Activated CD8-positive, alpha-beta memory T cell treated with anti-CD3 and anti-CD28 coated beads, Interleukin-2, amount 10 ng/mL, durations not matched to agents 7 days and 5 days (primary cell): ENCODE measurements at regions of chr12 and their contacts with region 1.

Region 1: GRCh38 chr12:57069523-57069922 is 9.1 kb downstream of the NEMP1 start:
- DNase-seq: peak; percentile 73
- ATAC-seq: peak; percentile 97
- H3K4me3 Mint-ChIP-seq: no peak overlapping the region
- H3K27ac Mint-ChIP-seq: peak overlapping the region; percentile 74
- H3K4me1 Mint-ChIP-seq: peaks cover 48% of the 10 kb centered on the region
- H3K27me3 Mint-ChIP-seq: no peaks in the 10 kb centered on the region

Region 2: GRCh38 chr12:57046947-57047890 is 22.3 kb before region 1 on chr12:
- CTCF ChIA-PET with region 1: interaction called, 14 read pairs
- DNase-seq: peak; percentile 89
- ATAC-seq: peak; percentile 85
- H3K4me3 Mint-ChIP-seq: peak overlapping the region; percentile 24
- H3K27ac Mint-ChIP-seq: peak overlapping the region; percentile 74
- H3K4me1 Mint-ChIP-seq: peaks cover 37% of the 10 kb centered on the region
- H3K27me3 Mint-ChIP-seq: peaks cover 22% of the 10 kb centered on the region

Region 3: DNA sequence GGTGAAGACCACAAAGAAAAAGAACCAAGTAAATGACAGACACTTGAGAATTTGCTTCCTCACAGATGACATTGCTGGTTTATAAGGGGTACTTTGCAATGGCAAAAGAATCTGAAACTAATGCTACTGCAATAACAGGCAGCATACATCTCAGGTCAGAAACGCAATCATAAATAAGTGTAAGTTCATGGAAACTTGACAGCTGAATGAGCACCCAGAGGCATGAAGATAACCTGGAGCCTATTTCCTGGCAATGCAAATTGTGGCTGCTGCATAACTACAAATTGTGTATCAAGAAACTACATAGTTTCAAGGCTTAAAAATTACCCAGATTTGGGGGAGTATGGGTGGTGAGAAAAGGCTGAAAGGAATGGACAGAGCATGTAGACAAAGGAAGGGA is 11.1 kb before region 1 on chr12:
- CTCF ChIA-PET with region 1: interaction called, 19 read pairs
- DNase-seq: no peak
- ATAC-seq: no peak
- H3K4me3 Mint-ChIP-seq: no peak overlapping the region
- H3K27ac Mint-ChIP-seq: no peak overlapping the region
- H3K4me1 Mint-ChIP-seq: peaks cover 10% of the 10 kb centered on the region
- H3K27me3 Mint-ChIP-seq: no peaks in the 10 kb centered on the region

Region 4: GRCh38 chr12:57088459-57089248 is 19.1 kb after region 1 on chr12 and contains the start of gene NAB2:
- CTCF ChIA-PET with region 1: interaction called, 83 read pairs
- DNase-seq: peak; percentile 97
- ATAC-seq: peak; percentile 80
- H3K4me3 Mint-ChIP-seq: peak within 1 kb of the TSS; percentile 84
- H3K27ac Mint-ChIP-seq: peak within 1 kb of the TSS; percentile 88
- H3K4me1 Mint-ChIP-seq: peaks cover 58% of the 10 kb centered on the region
- H3K27me3 Mint-ChIP-seq: no peaks in the 10 kb centered on the region
- total RNA-seq, gene NAB2: 10.0 to 31.1 TPM

Region 5: GRCh38 chr12:57116580-57117281 is 47.2 kb after region 1 on chr12:
- CTCF ChIA-PET with region 1: interaction called, 263 read pairs
- DNase-seq: no peak
- ATAC-seq: no peak
- H3K4me3 Mint-ChIP-seq: no peak overlapping the region
- H3K27ac Mint-ChIP-seq: no peak overlapping the region
- H3K4me1 Mint-ChIP-seq: peaks cover 18% of the 10 kb centered on the region
- H3K27me3 Mint-ChIP-seq: peaks cover 7% of the 10 kb centered on the region

Region 6: GRCh38 chr12:57223191-57224165 is 154.0 kb after region 1 on chr12:
- CTCF ChIA-PET with region 1: no interaction called
- DNase-seq: peak; percentile 82
- ATAC-seq: peak; percentile 72
- H3K4me3 Mint-ChIP-seq: peak overlapping the region; percentile 5
- H3K27ac Mint-ChIP-seq: peak overlapping the region; percentile 1
- H3K4me1 Mint-ChIP-seq: peaks cover 57% of the 10 kb centered on the region
- H3K27me3 Mint-ChIP-seq: peaks cover 79% of the 10 kb centered on the region